ENCODE measurements at regions of chr4 and their contacts with region 1.

Region 1: GRCh38 chr4:56544573-56545131 is 39.1 kb downstream of the ARL9 start:
- DNase-seq: peak; percentile 51 to 86
- H3K4me3 ChIP-seq: peak overlapping the region; percentile 57
- H3K27ac ChIP-seq: no peak overlapping the region
- H3K4me1 ChIP-seq: no peaks in the 10 kb centered on the region
- H3K27me3 ChIP-seq: no peaks in the 10 kb centered on the region
- CTCF ChIP-seq: peak; percentile 90

Region 2: DNA sequence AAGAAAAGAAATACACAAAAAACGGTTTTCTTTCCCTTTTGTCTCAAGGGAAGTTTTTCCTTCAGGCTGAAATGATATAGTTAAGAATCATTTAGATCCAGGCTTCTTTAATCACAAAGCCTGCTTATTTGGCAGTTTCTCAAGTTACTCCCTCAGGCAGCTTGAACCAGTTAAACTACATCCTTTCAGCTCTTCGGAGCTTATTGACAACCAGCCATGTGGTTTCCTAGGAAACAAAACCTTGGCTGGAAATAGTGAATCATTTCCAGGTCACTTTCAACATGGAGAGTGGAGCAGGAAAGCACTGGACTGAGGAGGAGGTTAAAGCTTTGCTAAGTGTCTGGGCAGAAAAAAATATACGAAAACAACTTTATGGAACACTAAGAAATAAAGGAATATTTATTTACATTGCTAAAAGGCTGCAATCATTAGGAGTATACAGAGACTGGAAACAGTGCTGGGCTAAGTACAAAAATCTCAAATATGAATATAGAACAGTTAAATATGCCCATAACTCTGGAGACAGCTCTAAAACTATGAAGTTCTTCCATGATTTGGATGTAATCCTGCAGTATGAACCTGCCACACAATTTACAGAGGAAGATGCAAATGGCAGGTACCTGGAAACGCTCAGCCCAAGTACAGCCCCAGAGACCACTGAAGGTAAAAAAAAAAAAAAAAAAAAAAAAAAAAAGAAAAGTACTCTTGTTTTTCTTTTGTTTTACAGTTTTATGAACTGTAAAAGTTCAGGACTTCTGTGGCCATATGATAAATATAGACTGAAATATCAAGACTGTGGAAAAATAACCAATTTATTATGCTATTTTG is 134.2 kb before region 1 on chr4:
- CTCF ChIA-PET with region 1: interaction called, 10 read pairs
- POLR2A ChIA-PET with region 1: no interaction called
- intact Hi-C with region 1: no loop called
- DNase-seq: peak; percentile 51 to 93
- H3K4me3 ChIP-seq: peak overlapping the region; percentile 48; the same call in 1 of the 2 replicates
- H3K27ac ChIP-seq: peak overlapping the region; percentile 69
- H3K4me1 ChIP-seq: peaks cover 29% of the 10 kb centered on the region
- H3K27me3 ChIP-seq: no peaks in the 10 kb centered on the region
- CTCF ChIP-seq: no peak

Region 3: DNA sequence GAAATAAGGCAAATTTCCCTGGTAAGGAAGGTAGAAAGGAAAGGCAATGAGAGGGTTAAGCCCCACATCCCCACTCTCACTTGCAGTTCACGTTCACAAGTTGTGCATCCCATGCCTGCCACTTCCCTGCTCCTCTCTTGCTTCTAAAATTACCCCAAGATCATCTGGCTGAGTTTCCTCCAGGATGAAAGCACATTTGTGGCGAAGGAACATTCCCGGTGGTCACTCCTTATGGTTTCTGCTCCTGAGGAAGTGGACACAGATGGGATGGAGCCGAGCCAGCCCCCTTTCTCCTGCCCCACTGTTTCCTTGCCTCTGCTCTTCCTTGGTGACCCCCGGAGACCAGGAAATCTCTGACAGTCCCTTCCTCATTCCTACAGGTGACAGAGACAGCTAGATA is 239.3 kb after region 1 on chr4:
- CTCF ChIA-PET with region 1: no interaction called
- POLR2A ChIA-PET with region 1: no interaction called
- intact Hi-C with region 1: no loop called
- DNase-seq: no peak
- H3K4me3 ChIP-seq: no peak overlapping the region
- H3K27ac ChIP-seq: no peak overlapping the region
- H3K4me1 ChIP-seq: no peaks in the 10 kb centered on the region
- H3K27me3 ChIP-seq: no peaks in the 10 kb centered on the region
- CTCF ChIP-seq: no peak